Left lung (tissue), 14 donors: ENCODE measurements at regions of chr11 and their contacts with region 1.

Region 1: DNA sequence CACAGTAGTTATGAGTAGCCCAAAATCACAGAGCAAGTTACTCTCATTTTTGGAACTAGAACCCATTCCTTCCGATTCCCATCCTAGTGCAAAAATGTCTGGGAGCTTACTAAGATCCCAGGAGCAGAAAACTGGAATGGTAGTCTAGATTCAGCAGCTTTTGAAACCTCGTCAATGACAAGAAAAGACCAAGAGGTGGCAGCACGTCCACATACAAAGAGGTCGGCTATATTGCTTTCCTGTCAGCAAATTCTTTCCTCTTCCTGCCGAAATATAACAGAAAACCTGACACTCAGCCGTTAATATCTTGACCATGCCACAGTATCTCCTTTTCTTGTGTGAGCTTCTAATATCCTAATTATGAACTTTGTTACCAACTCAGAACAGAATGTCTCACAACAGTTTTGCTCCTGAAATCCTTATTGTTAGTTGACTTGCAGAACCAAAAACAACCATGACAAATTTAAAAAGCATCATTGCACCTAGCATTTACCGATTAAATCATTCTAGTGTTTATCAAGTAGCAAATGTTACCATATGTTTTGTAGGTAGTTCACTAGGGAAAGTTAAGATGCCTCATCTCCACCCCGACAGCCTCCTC is 92.8 kb upstream of the OR9G4 start:
- DNase-seq: peak in 3 of 4 donors; percentile 35 to 76 (median 66)
- ATAC-seq: peak; percentile 80
- H3K4me3 ChIP-seq: no peak overlapping the region
- H3K27ac ChIP-seq: no peak overlapping the region
- H3K4me1 ChIP-seq: no peaks in the 10 kb centered on the region
- H3K27me3 ChIP-seq: no peaks in the 10 kb centered on the region
- CTCF ChIP-seq: peak; percentile 50 to 59

Region 2: GRCh38 chr11:57124917-57125316 is 283.6 kb after region 1 on chr11:
- intact Hi-C with region 1: loop called in 1 of 2 experiments (anchors 10 kb)
- DNase-seq: no peak
- ATAC-seq: no peak
- H3K4me3 ChIP-seq: no peak overlapping the region
- H3K27ac ChIP-seq: peak overlapping the region in 1 of 2 donors; percentile 26
- H3K4me1 ChIP-seq: peaks cover 0 to 5% of the 10 kb centered on the region in 2 donors
- H3K27me3 ChIP-seq: no peaks in the 10 kb centered on the region
- CTCF ChIP-seq: no peak

Region 3: DNA sequence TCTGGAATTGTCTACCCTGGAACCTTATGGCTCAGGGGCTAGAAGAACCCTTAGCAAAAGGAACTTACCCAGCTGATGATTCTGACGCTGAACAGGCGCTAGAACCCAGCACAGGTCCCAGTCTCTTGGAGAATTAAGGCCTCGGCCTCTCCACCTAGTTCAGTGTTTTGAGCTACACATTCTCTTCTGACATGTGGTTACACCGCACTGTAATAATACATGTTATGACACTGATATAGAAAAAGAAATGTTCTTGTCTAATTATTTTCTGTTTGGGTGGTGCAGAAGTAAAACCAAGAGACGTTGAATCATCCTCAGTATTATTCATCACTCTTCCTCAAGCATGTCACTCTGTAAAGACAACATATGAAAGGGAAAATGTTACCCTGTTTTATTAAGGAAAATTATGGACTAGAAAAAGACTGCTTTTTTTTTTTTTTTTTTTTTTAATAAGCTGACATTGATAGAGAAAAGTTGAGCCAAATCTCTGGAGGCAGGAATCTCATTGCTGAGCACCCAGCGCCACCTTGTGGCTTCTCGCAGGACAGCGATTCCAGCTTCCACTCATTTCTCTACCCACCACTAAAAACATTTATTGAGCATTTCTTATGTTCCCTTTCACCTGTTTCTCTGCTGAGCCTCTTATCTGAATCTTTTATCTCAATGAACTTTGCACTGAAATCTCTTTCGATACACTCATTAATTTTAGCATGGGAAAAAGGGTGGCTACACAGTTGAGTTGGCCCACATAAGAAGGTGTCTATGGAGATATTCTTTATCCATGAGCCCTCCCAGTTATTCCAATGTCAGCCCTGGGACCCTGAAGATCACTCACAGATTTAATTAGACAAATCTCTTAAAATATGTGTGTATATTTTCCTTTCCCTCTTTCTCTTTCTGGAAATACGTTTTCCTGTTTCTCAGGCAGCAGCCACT is 408.3 kb after region 1 on chr11:
- intact Hi-C with region 1: loop called in 1 of 2 experiments (anchors 5 kb)
- DNase-seq: peak; percentile 39 to 81 (median 73)
- ATAC-seq: peak; percentile 92
- H3K4me3 ChIP-seq: no peak overlapping the region
- H3K27ac ChIP-seq: no peak overlapping the region
- H3K4me1 ChIP-seq: peaks cover 0 to 6% of the 10 kb centered on the region in 2 donors
- H3K27me3 ChIP-seq: no peaks in the 10 kb centered on the region
- CTCF ChIP-seq: peak; percentile 77 to 79